AG04449 (cell line): ENCODE measurements at regions of chr4 and their contacts with region 1.

Region 1: GRCh38 chr4:166091912-166092510 is 219.0 kb downstream of the TLL1 start:
- DNase-seq: peak; percentile 2
- H3K4me3 ChIP-seq: no peak overlapping the region
- CTCF ChIP-seq: peak; percentile 59

Region 2: GRCh38 chr4:165493359-165493758 is 598.7 kb before region 1 on chr4:
- CTCF ChIA-PET with region 1: interaction called, 22 read pairs
- POLR2A ChIA-PET with region 1: no interaction called
- DNase-seq: no peak
- H3K4me3 ChIP-seq: no peak overlapping the region
- CTCF ChIP-seq: peak; percentile 77

Region 3: GRCh38 chr4:165537028-165537648 is 554.9 kb before region 1 on chr4:
- CTCF ChIA-PET with region 1: interaction called, 20 read pairs
- POLR2A ChIA-PET with region 1: no interaction called
- DNase-seq: peak; percentile 3
- H3K4me3 ChIP-seq: no peak overlapping the region
- CTCF ChIP-seq: peak; percentile 33

Region 4: GRCh38 chr4:166735553-166735952 is 643.5 kb after region 1 on chr4:
- CTCF ChIA-PET with region 1: no interaction called
- POLR2A ChIA-PET with region 1: no interaction called
- DNase-seq: no peak
- H3K4me3 ChIP-seq: no peak overlapping the region
- CTCF ChIP-seq: no peak